AG04449 (cell line): ENCODE measurements at regions of chr2 and their contacts with region 1.

Region 1: GRCh38 chr2:101796825-101797600 is 99.5 kb downstream of the MAP4K4 start:
- DNase-seq: no peak
- H3K4me3 ChIP-seq: no peak overlapping the region
- CTCF ChIP-seq: no peak

Region 2: DNA sequence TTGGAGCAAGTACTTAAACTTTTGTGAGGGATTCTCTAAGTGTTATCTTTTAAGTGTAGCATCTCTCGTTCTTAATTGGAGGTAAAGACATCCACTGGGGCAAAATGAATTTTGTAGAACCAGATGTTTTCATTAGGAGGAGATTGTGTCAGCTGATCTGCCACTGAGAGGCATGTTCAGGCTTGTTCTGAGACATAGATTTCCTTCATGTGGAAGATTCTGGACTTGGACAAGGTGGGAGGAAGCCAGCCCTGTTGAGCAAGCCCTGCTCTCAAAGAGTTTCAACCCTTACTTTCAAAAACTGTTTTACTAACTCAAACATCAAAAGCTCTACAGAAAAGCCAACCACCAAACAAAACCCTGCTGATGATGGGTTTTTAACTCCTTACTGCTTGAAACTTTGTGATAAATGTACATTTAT is 93.0 kb before region 1 on chr2:
- CTCF ChIA-PET with region 1: no interaction called
- POLR2A ChIA-PET with region 1: no interaction called
- DNase-seq: peak; percentile 28
- H3K4me3 ChIP-seq: no peak overlapping the region
- CTCF ChIP-seq: no peak

Region 3: DNA sequence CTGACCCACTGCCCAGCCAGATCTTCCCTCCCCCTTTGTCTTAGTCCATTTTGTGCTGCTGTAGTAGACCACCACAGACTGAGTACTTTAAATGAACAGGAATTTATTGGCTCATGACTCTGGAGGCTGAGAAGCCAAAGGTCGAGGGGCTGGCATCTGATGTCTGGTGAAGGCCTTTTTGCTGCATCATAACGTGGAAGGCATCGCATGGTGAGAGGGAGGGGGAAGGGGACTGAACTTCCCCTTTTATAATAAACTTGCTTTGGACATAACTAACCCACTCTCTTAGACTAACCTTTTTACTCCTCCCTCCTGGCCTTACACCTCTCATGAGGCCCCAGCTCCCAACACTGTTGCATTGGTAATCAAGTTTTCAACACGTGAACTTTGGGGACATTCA is 15.7 kb before region 1 on chr2:
- CTCF ChIA-PET with region 1: interaction called, 12 read pairs
- POLR2A ChIA-PET with region 1: no interaction called
- DNase-seq: no peak
- H3K4me3 ChIP-seq: no peak overlapping the region
- CTCF ChIP-seq: no peak